SK-N-SH (cell line): ENCODE measurements at regions of chr5 and their contacts with region 1.

Region 1: GRCh38 chr5:137320056-137321045 is 178.8 kb downstream of the SPOCK1 start:
- DNase-seq: peak; percentile 68
- H3K4me3 ChIP-seq: peak overlapping the region in 1 of 2 experiments; percentile 5; a peak in 1 of 4 replicates
- H3K27ac ChIP-seq: peak overlapping the region in 1 of 2 experiments; percentile 17; a peak in 1 of 4 replicates
- H3K4me1 ChIP-seq: peaks cover 3 to 21% of the 10 kb centered on the region in 2 experiments; a peak in 2 of 4 replicates
- H3K27me3 ChIP-seq: no peaks in the 10 kb centered on the region
- CTCF ChIP-seq: peak; percentile 79
- EP300 ChIP-seq: no peak
- RAD21 ChIP-seq: peak; percentile 89

Region 2: GRCh38 chr5:137336565-137337120 is 16.3 kb after region 1 on chr5:
- CTCF ChIA-PET with region 1: interaction called, 26 read pairs
- POLR2A ChIA-PET with region 1: no interaction called
- DNase-seq: no peak
- H3K4me3 ChIP-seq: no peak overlapping the region
- H3K27ac ChIP-seq: no peak overlapping the region
- H3K4me1 ChIP-seq: no peaks in the 10 kb centered on the region; a peak in 1 of 4 replicates
- H3K27me3 ChIP-seq: no peaks in the 10 kb centered on the region
- CTCF ChIP-seq: no peak
- EP300 ChIP-seq: no peak
- RAD21 ChIP-seq: no peak

Region 3: GRCh38 chr5:137365126-137365865 is 44.9 kb after region 1 on chr5:
- CTCF ChIA-PET with region 1: interaction called, 10 read pairs
- POLR2A ChIA-PET with region 1: no interaction called
- DNase-seq: no peak
- H3K4me3 ChIP-seq: no peak overlapping the region
- H3K27ac ChIP-seq: peak overlapping the region in 1 of 2 experiments; percentile 59; a peak in 2 of 4 replicates
- H3K4me1 ChIP-seq: peaks cover 24 to 47% of the 10 kb centered on the region in 2 experiments; a peak in 3 of 4 replicates
- H3K27me3 ChIP-seq: no peaks in the 10 kb centered on the region
- CTCF ChIP-seq: no peak
- EP300 ChIP-seq: no peak
- RAD21 ChIP-seq: no peak

Region 4: GRCh38 chr5:137450759-137451158 is 130.4 kb after region 1 on chr5:
- CTCF ChIA-PET with region 1: interaction called, 11 read pairs
- POLR2A ChIA-PET with region 1: no interaction called
- DNase-seq: no peak
- H3K4me3 ChIP-seq: no peak overlapping the region
- H3K27ac ChIP-seq: no peak overlapping the region
- H3K4me1 ChIP-seq: peaks cover 5 to 12% of the 10 kb centered on the region in 2 experiments; a peak in 2 of 4 replicates
- H3K27me3 ChIP-seq: no peaks in the 10 kb centered on the region
- CTCF ChIP-seq: no peak
- EP300 ChIP-seq: no peak
- RAD21 ChIP-seq: no peak

Region 5: DNA sequence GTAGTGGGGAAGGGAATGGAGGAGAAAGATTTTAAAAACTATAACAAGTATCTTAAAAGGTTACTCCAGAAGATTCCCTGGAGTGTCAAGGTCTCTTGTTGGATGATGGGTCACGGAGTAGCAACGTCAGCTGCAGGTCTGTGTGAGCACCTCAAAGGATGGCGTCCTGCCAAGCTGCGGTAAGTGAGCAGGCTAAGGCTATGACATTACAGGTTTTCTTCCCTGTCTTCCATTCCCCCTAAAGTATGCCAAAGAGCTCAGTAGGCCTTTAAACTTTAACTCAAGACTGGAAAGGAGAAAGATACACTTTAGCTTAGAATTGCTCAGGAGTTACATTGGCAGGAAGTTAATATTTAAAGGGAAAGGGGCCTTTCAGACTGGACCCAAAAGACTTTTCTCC is 161.2 kb after region 1 on chr5:
- CTCF ChIA-PET with region 1: interaction called, 12 read pairs
- POLR2A ChIA-PET with region 1: no interaction called
- DNase-seq: no peak
- H3K4me3 ChIP-seq: no peak overlapping the region
- H3K27ac ChIP-seq: no peak overlapping the region
- H3K4me1 ChIP-seq: peaks cover 0 to 11% of the 10 kb centered on the region in 2 experiments; a peak in 1 of 4 replicates
- H3K27me3 ChIP-seq: no peaks in the 10 kb centered on the region
- CTCF ChIP-seq: no peak
- EP300 ChIP-seq: no peak
- RAD21 ChIP-seq: no peak

Region 6: DNA sequence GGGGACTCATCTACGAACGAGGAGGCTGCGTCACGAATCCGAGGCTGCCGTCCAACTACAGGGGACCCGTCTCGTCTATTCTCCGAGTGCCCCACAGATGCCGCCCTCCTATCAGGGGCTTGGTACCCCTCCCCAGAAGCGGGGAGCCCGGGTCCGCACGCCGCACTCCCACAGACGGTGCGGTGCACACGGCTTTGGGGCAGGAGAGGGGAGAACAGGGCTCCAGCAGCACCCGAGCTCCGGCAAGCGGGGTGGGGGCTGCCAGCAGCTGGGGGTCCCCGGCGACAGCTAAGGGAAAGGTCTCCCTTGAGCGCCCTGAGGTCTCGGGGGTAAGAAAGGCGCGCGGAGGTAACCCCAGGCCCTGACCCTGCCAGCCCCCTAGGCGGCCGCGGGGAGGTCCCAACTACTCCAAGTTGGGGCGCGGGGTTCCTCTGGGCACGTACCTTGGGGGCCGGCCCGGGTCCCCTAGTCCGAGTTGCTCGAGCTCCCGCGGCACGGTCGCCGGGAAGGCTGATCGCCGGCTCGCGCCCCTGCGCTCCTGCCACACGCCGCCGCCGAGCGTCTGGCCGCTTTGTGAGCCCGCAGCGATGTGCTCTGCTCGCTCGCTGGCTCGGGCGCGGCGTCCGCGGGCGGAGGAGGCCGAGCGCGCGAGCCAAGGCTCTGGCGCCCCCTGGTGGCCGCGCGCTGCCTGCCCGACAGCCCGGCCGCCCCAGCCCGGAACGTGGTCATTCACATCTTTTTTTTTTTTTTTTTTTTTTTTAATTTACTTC is 178.6 kb after region 1 on chr5 and contains the start of gene SPOCK1:
- CTCF ChIA-PET with region 1: interaction called, 140 read pairs
- POLR2A ChIA-PET with region 1: interaction called, 4 read pairs
- DNase-seq: peak; percentile 94
- H3K4me3 ChIP-seq: peak within 1 kb of the TSS; percentile 54 to 77
- H3K27ac ChIP-seq: peak within 1 kb of the TSS in 1 of 2 experiments; percentile 55; a peak in 1 of 4 replicates
- H3K4me1 ChIP-seq: peaks cover 6% of the 10 kb centered on the region in 2 experiments; a peak in 2 of 4 replicates
- H3K27me3 ChIP-seq: no peaks in the 10 kb centered on the region
- CTCF ChIP-seq: peak; percentile 62
- EP300 ChIP-seq: 0 out of 4 replicates have a peak, but pooled peaks of 1 of the 2 experiments have one; percentile 11
- RAD21 ChIP-seq: peak; percentile 81
- polyA plus RNA-seq, gene SPOCK1: 9.1 and 11.3 TPM in 2 replicates

Region 7: GRCh38 chr5:137605411-137605810 is 285.1 kb after region 1 on chr5:
- CTCF ChIA-PET with region 1: interaction called, 23 read pairs
- POLR2A ChIA-PET with region 1: no interaction called
- DNase-seq: no peak
- H3K4me3 ChIP-seq: no peak overlapping the region
- H3K27ac ChIP-seq: no peak overlapping the region
- H3K4me1 ChIP-seq: peaks cover 0 to 32% of the 10 kb centered on the region in 2 experiments; a peak in 2 of 4 replicates
- H3K27me3 ChIP-seq: peaks cover 40% of the 10 kb centered on the region
- CTCF ChIP-seq: peak; percentile 27; the same call in 1 of the 2 replicates
- EP300 ChIP-seq: no peak
- RAD21 ChIP-seq: peak; percentile 56